Activated CD4-positive, alpha-beta T cell treated with anti-CD3 and anti-CD28 coated beads for 36 hours (primary cell): ENCODE measurements at regions of chr4 and their contacts with region 1.

Region 1: GRCh38 chr4:90051999-90052398 is 75.2 kb upstream of the CCSER1 start:
- DNase-seq: no peak
- ATAC-seq: no peak
- H3K4me3 Mint-ChIP-seq: no peak overlapping the region
- H3K27ac Mint-ChIP-seq: no peak overlapping the region
- H3K4me1 Mint-ChIP-seq: no peaks in the 10 kb centered on the region
- H3K27me3 Mint-ChIP-seq: peaks cover 2% of the 10 kb centered on the region

Region 2: GRCh38 chr4:90159185-90159584 is 107.2 kb after region 1 on chr4:
- CTCF ChIA-PET with region 1: no interaction called
- POLR2A ChIA-PET with region 1: no interaction called
- intact Hi-C with region 1: no loop called
- DNase-seq: no peak
- ATAC-seq: no peak
- H3K4me3 Mint-ChIP-seq: no peak overlapping the region
- H3K27ac Mint-ChIP-seq: no peak overlapping the region
- H3K4me1 Mint-ChIP-seq: no peaks in the 10 kb centered on the region
- H3K27me3 Mint-ChIP-seq: no peaks in the 10 kb centered on the region

Region 3: DNA sequence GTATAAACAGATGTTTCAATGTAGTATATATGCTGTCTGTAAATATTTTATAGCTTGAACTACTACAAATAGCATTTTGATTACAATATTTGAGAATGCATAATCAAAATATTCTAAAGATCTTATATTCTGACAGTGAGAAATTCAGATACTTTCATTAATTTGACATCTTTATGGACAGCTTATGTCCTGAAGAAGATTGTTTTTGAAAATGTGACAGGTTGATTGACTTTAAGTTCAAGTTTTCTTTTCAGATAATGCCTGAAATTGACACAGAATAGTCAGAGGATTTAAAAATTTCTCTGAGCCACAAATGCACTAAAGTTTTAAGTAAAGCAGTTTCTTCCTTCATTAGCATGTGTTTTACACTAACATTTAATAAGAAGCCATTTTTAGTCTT is 875.0 kb after region 1 on chr4:
- CTCF ChIA-PET with region 1: no interaction called
- POLR2A ChIA-PET with region 1: no interaction called
- intact Hi-C with region 1: loop called in 1 of 2 experiments (anchors 5 kb)
- DNase-seq: no peak
- ATAC-seq: no peak
- H3K4me3 Mint-ChIP-seq: no peak overlapping the region
- H3K27ac Mint-ChIP-seq: no peak overlapping the region
- H3K4me1 Mint-ChIP-seq: no peaks in the 10 kb centered on the region
- H3K27me3 Mint-ChIP-seq: no peaks in the 10 kb centered on the region